Endothelial cell of umbilical vein (primary cell): ENCODE measurements at regions of chr7 and their contacts with region 1.

Region 1: GRCh38 chr7:135509903-135510602 is at the start of gene CNOT4:
- DNase-seq: peak; percentile 98
- H3K4me3 ChIP-seq: peak within 1 kb of the TSS; percentile 92 to 95 (median 93)
- H3K27ac ChIP-seq: peak within 1 kb of the TSS; percentile 83
- H3K4me1 ChIP-seq: peaks cover 19% of the 10 kb centered on the region
- H3K27me3 ChIP-seq: no peaks in the 10 kb centered on the region
- CTCF ChIP-seq: no peak
- POLR2A ChIP-seq: peak; percentile 92
- total RNA-seq, gene CNOT4: 20.9 and 21.7 TPM in 2 replicates

Region 2: DNA sequence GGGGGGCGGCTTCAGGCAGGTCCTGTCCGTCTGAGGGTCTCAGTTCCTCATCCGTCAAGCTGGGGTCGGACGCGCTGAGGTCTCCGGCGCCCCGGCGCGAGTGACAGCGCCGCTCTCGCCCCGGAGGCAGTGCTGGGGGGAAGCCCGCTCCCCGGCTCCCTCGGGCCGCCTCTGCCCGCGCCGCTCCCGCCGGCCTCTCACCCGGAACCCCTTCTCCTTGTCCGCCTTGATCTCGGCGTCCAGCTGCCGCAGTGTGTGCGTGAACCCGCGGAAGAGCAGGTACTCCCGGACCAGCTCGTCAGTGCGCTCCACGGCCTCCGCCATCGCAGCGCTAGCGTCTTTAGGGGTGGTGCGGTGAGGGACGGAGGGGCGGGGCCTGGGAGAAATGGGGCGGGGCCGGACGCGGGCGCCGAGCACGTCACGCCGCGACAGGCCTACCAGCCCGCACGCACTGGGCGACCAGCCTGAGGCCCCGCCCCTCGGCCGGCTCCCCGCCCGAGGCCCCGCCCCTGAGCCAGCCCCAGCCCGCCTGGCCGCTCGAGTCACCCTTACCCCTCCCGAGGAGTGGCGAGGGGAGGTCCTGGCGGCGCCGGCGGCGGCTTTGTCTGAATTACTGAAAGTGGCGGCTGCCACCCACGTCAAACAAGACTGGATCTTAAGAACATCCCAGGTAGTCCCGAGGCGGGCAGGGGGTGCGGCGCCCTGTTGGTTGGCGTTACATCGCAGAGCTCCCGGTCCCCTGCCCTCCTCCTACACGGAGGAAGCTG is 298.7 kb before region 1 on chr7 and contains the start of gene WDR91:
- CTCF ChIA-PET with region 1: no interaction called
- POLR2A ChIA-PET with region 1: no interaction called
- dilution Hi-C with region 1: no loop called
- intact Hi-C with region 1: loop called (anchors 5 kb)
- DNase-seq: peak; percentile 97
- H3K4me3 ChIP-seq: peak within 1 kb of the TSS; percentile 86 to 94 (median 91)
- H3K27ac ChIP-seq: peak within 1 kb of the TSS; percentile 93
- H3K4me1 ChIP-seq: peaks cover 8% of the 10 kb centered on the region
- H3K27me3 ChIP-seq: no peaks in the 10 kb centered on the region
- CTCF ChIP-seq: no peak
- POLR2A ChIP-seq: peak; percentile 77
- total RNA-seq, gene WDR91: 7.0 and 9.8 TPM in 2 replicates

Region 3: DNA sequence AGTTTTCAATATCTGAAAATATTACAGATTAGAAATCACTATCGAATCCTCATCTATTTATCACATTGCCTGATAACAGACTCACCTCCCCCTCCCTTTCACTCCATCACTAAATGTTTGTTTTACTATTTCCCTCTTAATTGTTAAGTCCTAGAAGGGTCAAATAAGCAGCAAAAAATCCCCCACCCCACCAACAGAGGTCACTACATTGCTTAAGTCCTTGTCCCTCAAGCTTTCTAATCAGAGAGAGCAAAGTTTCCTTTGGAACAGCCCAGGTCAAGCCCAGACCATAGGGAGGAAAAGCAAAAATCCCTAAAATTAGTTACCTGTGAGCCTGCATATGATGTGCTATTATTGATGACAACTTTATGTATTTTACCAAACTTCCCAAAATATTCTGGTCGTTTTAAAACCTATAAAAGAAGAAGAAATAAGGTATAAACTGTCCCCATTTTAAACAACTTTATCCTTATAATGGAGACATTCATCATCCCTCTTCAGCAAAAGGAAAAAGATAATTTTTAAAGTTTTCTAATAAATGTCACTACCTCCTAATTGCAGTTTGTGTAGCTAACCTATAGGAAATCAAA is 95.1 kb before region 1 on chr7:
- CTCF ChIA-PET with region 1: interaction called, 6 read pairs
- POLR2A ChIA-PET with region 1: no interaction called
- dilution Hi-C with region 1: no loop called
- intact Hi-C with region 1: loop called (anchors 2 kb)
- DNase-seq: peak; percentile 76
- H3K4me3 ChIP-seq: no peak overlapping the region
- H3K27ac ChIP-seq: no peak overlapping the region
- H3K4me1 ChIP-seq: peaks cover 15% of the 10 kb centered on the region
- H3K27me3 ChIP-seq: no peaks in the 10 kb centered on the region
- CTCF ChIP-seq: peak; percentile 46 to 49
- POLR2A ChIP-seq: no peak

Region 4: GRCh38 chr7:135558337-135558767 is 48.3 kb after region 1 on chr7:
- CTCF ChIA-PET with region 1: no interaction called
- POLR2A ChIA-PET with region 1: no interaction called
- dilution Hi-C with region 1: no loop called
- intact Hi-C with region 1: loop called (anchors 1 kb)
- DNase-seq: peak; percentile 77
- H3K4me3 ChIP-seq: peak overlapping the region; percentile 60 to 73 (median 71)
- H3K27ac ChIP-seq: peak overlapping the region; percentile 88
- H3K4me1 ChIP-seq: peaks cover 10% of the 10 kb centered on the region
- H3K27me3 ChIP-seq: no peaks in the 10 kb centered on the region
- CTCF ChIP-seq: peak; percentile 32 to 50
- POLR2A ChIP-seq: no peak

Region 5: DNA sequence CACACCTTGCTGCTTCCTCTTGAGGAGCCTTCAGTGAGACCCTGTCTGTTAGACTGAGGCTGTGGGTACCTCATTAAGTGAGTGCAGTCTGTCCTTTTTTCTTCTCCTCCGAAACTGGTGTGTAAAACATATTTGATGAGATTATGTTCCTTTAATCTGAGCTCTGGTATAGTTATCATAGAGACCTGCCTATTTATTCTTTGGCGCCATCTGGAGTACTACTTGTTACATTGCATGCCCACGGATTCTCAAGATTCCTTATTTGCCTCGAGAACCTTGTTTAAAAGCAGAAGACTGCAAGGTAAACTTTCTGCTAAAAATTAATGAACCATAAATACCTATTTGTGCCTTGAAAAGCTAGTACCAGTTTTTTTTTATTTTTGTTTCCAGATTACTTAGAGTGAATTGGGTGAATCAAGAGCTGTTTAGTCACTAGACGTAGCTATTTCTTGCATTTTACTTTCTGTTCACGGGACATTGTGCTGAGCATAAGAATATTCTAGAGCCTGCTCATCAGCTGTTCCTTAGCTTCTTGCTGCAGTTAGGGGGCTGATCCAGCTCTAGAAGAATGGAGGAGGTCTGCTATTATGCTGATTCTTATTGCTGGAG is 135.3 kb after region 1 on chr7:
- CTCF ChIA-PET with region 1: interaction called, 13 read pairs
- POLR2A ChIA-PET with region 1: no interaction called
- dilution Hi-C with region 1: no loop called
- intact Hi-C with region 1: loop called (anchors 5 kb)
- DNase-seq: peak; percentile 60
- H3K4me3 ChIP-seq: no peak overlapping the region
- H3K27ac ChIP-seq: no peak overlapping the region
- H3K4me1 ChIP-seq: no peaks in the 10 kb centered on the region
- H3K27me3 ChIP-seq: no peaks in the 10 kb centered on the region
- CTCF ChIP-seq: peak; percentile 35 to 57
- POLR2A ChIP-seq: no peak

Region 6: DNA sequence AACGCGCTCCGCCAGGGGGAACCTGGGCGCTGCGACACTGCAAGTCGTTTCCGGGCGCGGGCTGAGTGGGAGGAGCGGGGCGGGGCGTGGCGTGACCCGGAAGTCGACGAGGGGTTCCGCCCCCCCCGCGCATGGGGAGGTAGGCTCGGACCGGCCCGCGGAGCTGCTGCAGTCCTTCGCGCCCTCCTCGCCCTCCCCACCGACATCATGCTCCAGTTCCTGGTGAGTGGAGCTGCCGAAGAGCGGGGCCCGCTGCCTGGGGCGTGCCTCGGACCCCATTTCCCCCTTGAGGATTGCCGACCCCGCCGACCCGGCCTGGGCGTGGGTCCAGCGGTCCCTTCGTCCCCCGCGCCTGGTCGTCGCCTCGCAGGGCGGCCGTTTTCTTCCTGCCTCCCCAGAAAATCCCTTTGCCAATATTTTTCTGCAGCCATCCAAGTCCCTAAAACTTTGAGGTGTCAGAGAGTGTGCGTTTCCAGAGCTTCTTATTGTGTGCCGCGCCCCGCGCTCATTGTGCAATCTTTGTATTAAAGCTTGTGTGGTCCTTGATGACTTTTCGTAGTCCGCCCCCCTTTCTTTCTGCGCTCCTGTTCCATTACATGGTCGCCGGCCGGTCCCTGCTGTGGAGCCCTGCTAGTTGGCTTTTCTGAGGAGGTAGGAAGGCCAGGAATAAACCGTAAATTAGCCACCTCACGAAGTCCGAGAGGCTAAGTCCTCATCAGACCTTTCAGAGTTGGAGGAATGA is 152.5 kb after region 1 on chr7 and contains the start of gene STMP1:
- CTCF ChIA-PET with region 1: interaction called, 3 read pairs
- POLR2A ChIA-PET with region 1: no interaction called
- dilution Hi-C with region 1: no loop called
- intact Hi-C with region 1: loop called (anchors 5 kb)
- DNase-seq: peak; percentile 95
- H3K4me3 ChIP-seq: peak within 1 kb of the TSS; percentile 68 to 91 (median 86)
- H3K27ac ChIP-seq: peak within 1 kb of the TSS; percentile 91
- H3K4me1 ChIP-seq: peaks cover 36% of the 10 kb centered on the region
- H3K27me3 ChIP-seq: no peaks in the 10 kb centered on the region
- CTCF ChIP-seq: peak in 1 of 2 donors; percentile 77
- POLR2A ChIP-seq: peak; percentile 96
- total RNA-seq, gene STMP1: 21.4 and 31.3 TPM in 2 replicates

Region 7: DNA sequence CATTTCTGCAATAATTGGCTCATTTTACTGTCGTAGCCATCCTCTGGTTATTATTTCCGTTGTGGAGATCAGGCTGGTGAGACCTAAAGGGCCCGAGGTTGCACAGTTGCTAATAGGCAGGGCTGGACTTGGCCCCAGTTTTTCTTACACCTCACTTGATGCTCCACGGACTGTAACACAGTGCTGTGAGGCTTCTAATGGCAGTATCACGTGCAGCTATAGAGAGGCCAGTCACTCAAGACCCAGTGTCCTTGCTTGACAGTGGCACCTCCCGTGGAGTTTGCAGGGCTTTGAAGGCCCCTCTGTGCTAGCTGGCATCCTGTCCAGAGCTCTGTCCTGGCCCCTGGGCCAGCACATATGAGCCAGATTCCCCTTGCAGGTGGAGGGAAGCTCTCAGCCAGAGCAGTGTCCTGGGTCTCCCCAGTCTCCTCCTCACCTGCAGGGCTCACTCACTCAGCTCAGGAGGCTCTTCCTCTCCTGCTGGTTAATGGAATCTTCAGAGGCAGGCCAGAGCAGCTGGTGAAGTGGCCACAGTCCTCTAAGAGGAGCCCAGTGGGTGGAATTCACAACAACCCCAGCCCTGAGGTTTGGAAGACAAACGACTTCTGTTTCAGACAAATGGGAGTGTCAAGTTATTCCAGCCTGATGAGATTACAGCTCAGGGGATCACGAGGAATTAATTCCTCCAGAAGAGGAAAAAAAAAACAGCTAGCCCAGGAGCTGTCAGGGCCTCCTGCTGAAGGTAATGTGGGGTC is 352.7 kb after region 1 on chr7:
- CTCF ChIA-PET with region 1: no interaction called
- POLR2A ChIA-PET with region 1: no interaction called
- dilution Hi-C with region 1: no loop called
- intact Hi-C with region 1: no loop called
- DNase-seq: no peak
- H3K4me3 ChIP-seq: no peak overlapping the region
- H3K27ac ChIP-seq: no peak overlapping the region
- H3K4me1 ChIP-seq: no peaks in the 10 kb centered on the region
- H3K27me3 ChIP-seq: no peaks in the 10 kb centered on the region
- CTCF ChIP-seq: no peak
- POLR2A ChIP-seq: no peak